B cell (primary cell): ENCODE measurements at regions of chr17 and their contacts with region 1.

Region 1: GRCh38 chr17:1229432-1229899 is 40.8 kb upstream of the BHLHA9 start:
- DNase-seq: peak; percentile 91
- ATAC-seq: peak; percentile 62
- H3K4me3 ChIP-seq: peak overlapping the region in 4 of 5 experiments; percentile 31 to 80 (median 66)
- H3K4me3 Mint-ChIP-seq: peak overlapping the region; percentile 83
- H3K27ac ChIP-seq: peak overlapping the region in 1 of 2 donors; percentile 82
- H3K27ac Mint-ChIP-seq: peak overlapping the region; percentile 78
- H3K4me1 ChIP-seq: peaks cover 25 to 32% of the 10 kb centered on the region in 2 donors
- H3K4me1 Mint-ChIP-seq: peaks cover 39% of the 10 kb centered on the region
- H3K27me3 ChIP-seq: peaks cover 0 to 11% (median 0%) of the 10 kb centered on the region in 4 experiments
- H3K27me3 Mint-ChIP-seq: peaks cover 9% of the 10 kb centered on the region
- CTCF ChIP-seq: no peak

Region 2: GRCh38 chr17:1122533-1123392 is 106.7 kb before region 1 on chr17:
- CTCF ChIA-PET with region 1: interaction called, 23 read pairs
- POLR2A ChIA-PET with region 1: no interaction called
- intact Hi-C with region 1: no loop called
- DNase-seq: peak; percentile 85
- ATAC-seq: peak; percentile 95
- H3K4me3 ChIP-seq: no peak overlapping the region
- H3K4me3 Mint-ChIP-seq: no peak overlapping the region
- H3K27ac ChIP-seq: no peak overlapping the region
- H3K27ac Mint-ChIP-seq: no peak overlapping the region
- H3K4me1 ChIP-seq: peaks cover 12% of the 10 kb centered on the region in 2 donors
- H3K4me1 Mint-ChIP-seq: peaks cover 15% of the 10 kb centered on the region
- H3K27me3 ChIP-seq: no peaks in the 10 kb centered on the region
- H3K27me3 Mint-ChIP-seq: no peaks in the 10 kb centered on the region
- CTCF ChIP-seq: peak; percentile 92

Region 3: DNA sequence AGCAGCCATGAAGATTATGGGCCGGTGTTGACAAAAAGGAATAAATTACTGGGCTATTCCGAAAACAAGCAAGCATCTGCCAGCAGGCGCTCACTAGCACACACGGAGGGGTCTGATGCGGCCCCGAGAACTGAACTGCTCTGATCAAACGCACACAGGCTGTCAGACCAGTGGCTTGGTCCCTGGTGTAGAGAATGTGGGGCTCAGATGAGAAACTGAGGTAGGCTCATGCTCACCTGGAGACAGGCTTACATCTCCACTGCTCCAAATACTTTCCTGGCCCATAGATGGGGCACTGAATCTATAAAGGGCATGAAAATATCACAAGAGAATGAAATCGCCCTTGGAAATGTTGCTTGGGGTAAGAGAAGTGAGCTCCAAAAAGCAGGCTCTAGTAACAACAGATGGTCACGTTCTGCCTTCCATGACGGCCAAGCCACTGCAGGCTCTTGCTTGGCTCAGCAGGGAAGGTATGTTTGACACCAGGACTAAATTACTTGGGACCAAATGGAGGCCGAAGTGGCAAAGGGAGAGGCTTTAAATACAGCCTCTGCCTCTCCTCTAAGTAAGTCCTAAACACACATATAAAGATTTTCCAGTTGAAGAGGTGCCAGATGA is 55.1 kb before region 1 on chr17:
- CTCF ChIA-PET with region 1: no interaction called
- POLR2A ChIA-PET with region 1: no interaction called
- intact Hi-C with region 1: no loop called
- DNase-seq: no peak
- ATAC-seq: no peak
- H3K4me3 ChIP-seq: no peak overlapping the region
- H3K4me3 Mint-ChIP-seq: no peak overlapping the region
- H3K27ac ChIP-seq: no peak overlapping the region
- H3K27ac Mint-ChIP-seq: no peak overlapping the region
- H3K4me1 ChIP-seq: peaks cover 10 to 19% of the 10 kb centered on the region in 2 donors
- H3K4me1 Mint-ChIP-seq: peaks cover 22% of the 10 kb centered on the region
- H3K27me3 ChIP-seq: peaks cover 0 to 9% (median 4%) of the 10 kb centered on the region in 4 experiments
- H3K27me3 Mint-ChIP-seq: no peaks in the 10 kb centered on the region
- CTCF ChIP-seq: no peak

Region 4: GRCh38 chr17:1186923-1187771 is 42.3 kb before region 1 on chr17:
- CTCF ChIA-PET with region 1: interaction called, 29 read pairs
- POLR2A ChIA-PET with region 1: interaction called, 8 read pairs
- intact Hi-C with region 1: no loop called
- DNase-seq: peak; percentile 82
- ATAC-seq: peak; percentile 72
- H3K4me3 ChIP-seq: no peak overlapping the region
- H3K4me3 Mint-ChIP-seq: peak overlapping the region; percentile 59
- H3K27ac ChIP-seq: no peak overlapping the region
- H3K27ac Mint-ChIP-seq: peak overlapping the region; percentile 21
- H3K4me1 ChIP-seq: peaks cover 42 to 49% of the 10 kb centered on the region in 2 donors
- H3K4me1 Mint-ChIP-seq: peaks cover 54% of the 10 kb centered on the region
- H3K27me3 ChIP-seq: peaks cover 0 to under 1% (median 0%) of the 10 kb centered on the region in 4 experiments
- H3K27me3 Mint-ChIP-seq: no peaks in the 10 kb centered on the region
- CTCF ChIP-seq: peak; percentile 97

Region 5: DNA sequence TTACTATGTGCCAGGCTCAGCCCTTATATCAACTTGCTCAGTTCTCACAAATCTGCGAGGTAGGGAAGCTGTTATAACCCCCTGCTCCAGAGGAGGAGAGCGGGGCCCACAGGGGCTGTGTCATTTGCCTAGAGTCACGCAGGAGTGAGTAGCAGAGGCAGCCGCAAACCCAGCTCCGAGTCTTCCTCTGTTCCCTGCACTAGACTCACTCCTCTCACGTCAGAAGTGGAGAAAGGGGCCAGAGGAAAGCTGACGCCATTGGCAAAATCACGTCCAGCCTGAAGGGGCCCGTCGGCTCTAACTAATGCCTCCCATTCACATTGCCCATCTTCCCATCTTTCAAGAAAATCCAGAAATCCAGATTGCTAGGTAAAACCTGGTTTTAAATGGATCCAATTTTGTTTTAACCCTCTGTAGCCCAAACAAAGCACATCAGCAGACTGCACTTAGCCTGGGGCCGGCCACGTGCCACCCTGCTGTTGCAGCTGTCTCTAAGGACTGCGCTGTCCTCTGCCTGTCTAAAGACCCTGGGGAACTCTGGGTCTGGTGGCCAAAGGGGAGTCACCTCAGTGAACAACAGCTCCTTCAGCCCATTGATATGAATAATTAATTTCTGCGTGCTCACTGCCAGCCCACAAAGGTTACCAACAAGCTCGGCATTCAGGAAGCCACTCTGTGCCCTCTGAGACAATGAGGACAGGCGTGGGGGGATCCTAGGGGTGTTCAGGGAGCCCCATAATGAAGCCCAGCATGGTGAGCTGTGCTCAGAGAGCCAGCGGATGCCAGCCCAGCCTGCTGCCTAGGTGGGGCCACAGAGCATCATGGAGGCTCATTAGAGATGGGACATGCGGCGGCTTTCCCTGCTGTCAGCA is 13.0 kb before region 1 on chr17:
- CTCF ChIA-PET with region 1: interaction called, 13 read pairs
- POLR2A ChIA-PET with region 1: interaction called, 9 read pairs
- intact Hi-C with region 1: loop called (anchors 1 kb)
- DNase-seq: peak; percentile 74
- ATAC-seq: peak; percentile 84
- H3K4me3 ChIP-seq: peak overlapping the region in 2 of 5 experiments; percentile 31 to 50
- H3K4me3 Mint-ChIP-seq: peak overlapping the region; percentile 69
- H3K27ac ChIP-seq: peak overlapping the region in 1 of 2 donors; percentile 49
- H3K27ac Mint-ChIP-seq: peak overlapping the region; percentile 67
- H3K4me1 ChIP-seq: peaks cover 52 to 60% of the 10 kb centered on the region in 2 donors
- H3K4me1 Mint-ChIP-seq: peaks cover 76% of the 10 kb centered on the region
- H3K27me3 ChIP-seq: no peaks in the 10 kb centered on the region
- H3K27me3 Mint-ChIP-seq: no peaks in the 10 kb centered on the region
- CTCF ChIP-seq: no peak

Region 6: GRCh38 chr17:1251866-1252608 is 22.6 kb after region 1 on chr17:
- CTCF ChIA-PET with region 1: no interaction called
- POLR2A ChIA-PET with region 1: no interaction called
- intact Hi-C with region 1: no loop called
- DNase-seq: no peak
- ATAC-seq: no peak
- H3K4me3 ChIP-seq: no peak overlapping the region
- H3K4me3 Mint-ChIP-seq: no peak overlapping the region
- H3K27ac ChIP-seq: no peak overlapping the region
- H3K27ac Mint-ChIP-seq: no peak overlapping the region
- H3K4me1 ChIP-seq: peaks cover 5 to 6% of the 10 kb centered on the region in 2 donors
- H3K4me1 Mint-ChIP-seq: peaks cover 3% of the 10 kb centered on the region
- H3K27me3 ChIP-seq: peaks cover 0 to 23% (median 10%) of the 10 kb centered on the region in 4 experiments
- H3K27me3 Mint-ChIP-seq: peaks cover 25% of the 10 kb centered on the region
- CTCF ChIP-seq: no peak

Region 7: GRCh38 chr17:1286379-1287106 is 57.1 kb after region 1 on chr17:
- CTCF ChIA-PET with region 1: no interaction called
- POLR2A ChIA-PET with region 1: no interaction called
- intact Hi-C with region 1: no loop called
- DNase-seq: no peak
- ATAC-seq: no peak
- H3K4me3 ChIP-seq: no peak overlapping the region
- H3K4me3 Mint-ChIP-seq: no peak overlapping the region
- H3K27ac ChIP-seq: no peak overlapping the region
- H3K27ac Mint-ChIP-seq: no peak overlapping the region
- H3K4me1 ChIP-seq: no peaks in the 10 kb centered on the region
- H3K4me1 Mint-ChIP-seq: no peaks in the 10 kb centered on the region
- H3K27me3 ChIP-seq: no peaks in the 10 kb centered on the region
- H3K27me3 Mint-ChIP-seq: no peaks in the 10 kb centered on the region
- CTCF ChIP-seq: no peak

Region 8: DNA sequence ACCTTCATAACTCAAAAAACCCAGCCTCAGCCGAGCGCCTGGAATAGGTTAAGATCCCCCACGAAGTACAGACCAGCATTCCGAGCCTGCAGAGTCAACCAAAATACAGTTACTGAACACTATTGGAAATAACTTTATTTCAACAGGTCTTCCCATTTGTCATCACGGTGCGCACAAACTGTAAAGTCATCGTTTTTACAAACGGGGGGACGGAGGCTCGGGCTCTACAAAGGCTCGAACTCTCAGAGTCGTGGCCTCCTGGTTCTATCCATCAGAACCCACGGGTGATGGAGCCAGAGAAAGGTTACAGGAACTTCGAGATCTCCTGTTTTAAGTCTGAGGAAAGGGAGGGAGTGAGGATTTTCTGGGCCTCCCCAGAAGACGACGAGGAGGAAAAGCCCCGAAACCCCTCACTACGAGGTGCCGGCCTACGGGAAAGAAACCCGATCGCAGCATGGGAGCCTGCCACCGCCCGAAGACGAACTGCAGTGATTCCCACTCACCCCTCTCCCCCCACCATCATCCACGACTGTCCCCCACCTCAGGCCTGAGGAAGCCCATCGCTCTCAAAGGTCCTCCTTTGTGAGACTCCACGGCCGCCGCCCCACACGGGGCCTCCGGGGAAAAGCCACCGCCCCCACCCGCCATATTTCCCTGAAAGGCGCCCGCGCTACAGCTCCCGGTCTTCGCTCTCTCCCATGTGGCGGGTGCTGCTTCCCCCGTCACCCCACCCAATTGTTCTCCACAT is 169.6 kb after region 1 on chr17:
- CTCF ChIA-PET with region 1: no interaction called
- POLR2A ChIA-PET with region 1: no interaction called
- intact Hi-C with region 1: no loop called
- DNase-seq: no peak
- ATAC-seq: peak; percentile 46
- H3K4me3 ChIP-seq: peak overlapping the region; percentile 75 to 94 (median 85)
- H3K4me3 Mint-ChIP-seq: peak overlapping the region; percentile 100
- H3K27ac ChIP-seq: peak overlapping the region; percentile 84 to 94
- H3K27ac Mint-ChIP-seq: peak overlapping the region; percentile 99
- H3K4me1 ChIP-seq: peaks cover 26 to 40% of the 10 kb centered on the region in 2 donors
- H3K4me1 Mint-ChIP-seq: peaks cover 37% of the 10 kb centered on the region
- H3K27me3 ChIP-seq: no peaks in the 10 kb centered on the region
- H3K27me3 Mint-ChIP-seq: no peaks in the 10 kb centered on the region
- CTCF ChIP-seq: no peak

Region 9: GRCh38 chr17:1590031-1590748 is 360.7 kb after region 1 on chr17:
- CTCF ChIA-PET with region 1: no interaction called
- POLR2A ChIA-PET with region 1: no interaction called
- intact Hi-C with region 1: loop called (anchors 2 kb)
- DNase-seq: no peak
- ATAC-seq: no peak
- H3K4me3 ChIP-seq: no peak overlapping the region
- H3K4me3 Mint-ChIP-seq: no peak overlapping the region
- H3K27ac ChIP-seq: no peak overlapping the region
- H3K27ac Mint-ChIP-seq: peak overlapping the region; percentile 74
- H3K4me1 ChIP-seq: peaks cover 24 to 35% of the 10 kb centered on the region in 2 donors
- H3K4me1 Mint-ChIP-seq: peaks cover 27% of the 10 kb centered on the region
- H3K27me3 ChIP-seq: no peaks in the 10 kb centered on the region
- H3K27me3 Mint-ChIP-seq: no peaks in the 10 kb centered on the region
- CTCF ChIP-seq: no peak